AG04449 (cell line): ENCODE measurements at regions of chr10 and their contacts with region 1.

Region 1: DNA sequence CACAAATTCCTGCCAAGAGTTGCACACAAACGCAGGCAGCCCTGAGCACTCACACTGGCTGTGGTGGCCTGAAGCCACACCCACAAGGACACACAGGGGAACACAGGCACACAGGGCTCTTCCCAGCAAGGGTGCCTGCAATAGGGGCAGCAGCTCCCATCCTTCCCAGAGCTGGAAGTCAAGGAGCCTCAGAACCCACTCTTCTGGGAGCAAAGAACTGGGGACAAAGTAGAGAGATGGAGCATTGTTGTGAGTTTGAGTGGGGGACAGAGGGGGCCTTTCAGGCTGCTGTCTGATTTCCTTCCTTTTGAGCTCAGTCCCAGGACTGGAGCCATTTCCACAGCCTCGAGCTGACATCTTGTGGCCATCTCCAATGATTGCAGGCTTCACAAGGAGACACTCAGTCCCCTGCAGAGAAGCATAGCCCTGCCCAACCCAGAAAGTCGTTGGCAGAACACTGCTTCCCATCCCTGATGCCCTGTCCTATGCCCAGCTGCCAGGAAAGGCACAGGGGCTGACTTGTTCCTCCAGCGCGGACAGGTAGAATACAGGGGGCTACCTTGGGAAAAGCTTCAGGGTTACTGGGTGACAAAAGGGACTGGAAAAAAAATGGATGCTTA is 34.4 kb upstream of the SLF2 start:
- DNase-seq: no peak
- H3K4me3 ChIP-seq: no peak overlapping the region
- CTCF ChIP-seq: peak; percentile 83

Region 2: DNA sequence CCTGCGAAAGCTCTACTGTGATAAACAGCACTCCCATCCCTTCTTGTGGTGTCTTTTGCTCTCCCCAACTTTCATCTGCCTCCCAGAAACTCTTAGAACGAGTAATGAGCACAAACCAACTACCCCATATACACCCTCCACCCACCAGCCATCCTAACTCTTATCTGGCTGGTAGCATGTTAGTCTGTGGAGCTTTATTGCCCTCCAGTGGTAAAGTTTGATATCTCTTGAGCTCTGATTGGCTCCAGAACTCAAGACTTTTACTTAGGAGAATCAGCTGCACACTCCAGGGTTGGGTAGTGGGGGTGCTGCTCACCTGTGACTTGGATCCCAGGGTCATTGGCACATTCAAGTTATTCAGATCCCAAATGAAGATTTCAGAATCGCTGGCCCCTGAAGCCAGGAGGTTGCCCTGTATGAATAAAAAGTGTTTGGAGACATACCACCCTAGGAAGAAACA is 369.7 kb before region 1 on chr10:
- CTCF ChIA-PET with region 1: interaction called, 23 read pairs
- POLR2A ChIA-PET with region 1: no interaction called
- DNase-seq: no peak
- H3K4me3 ChIP-seq: no peak overlapping the region
- CTCF ChIP-seq: peak; percentile 63

Region 3: GRCh38 chr10:100529475-100530298 is 348.7 kb before region 1 on chr10 and contains the start of gene NDUFB8:
- CTCF ChIA-PET with region 1: interaction called, 50 read pairs
- POLR2A ChIA-PET with region 1: interaction called, 3 read pairs
- DNase-seq: no peak
- H3K4me3 ChIP-seq: peak within 1 kb of the TSS; percentile 98
- CTCF ChIP-seq: no peak

Region 4: DNA sequence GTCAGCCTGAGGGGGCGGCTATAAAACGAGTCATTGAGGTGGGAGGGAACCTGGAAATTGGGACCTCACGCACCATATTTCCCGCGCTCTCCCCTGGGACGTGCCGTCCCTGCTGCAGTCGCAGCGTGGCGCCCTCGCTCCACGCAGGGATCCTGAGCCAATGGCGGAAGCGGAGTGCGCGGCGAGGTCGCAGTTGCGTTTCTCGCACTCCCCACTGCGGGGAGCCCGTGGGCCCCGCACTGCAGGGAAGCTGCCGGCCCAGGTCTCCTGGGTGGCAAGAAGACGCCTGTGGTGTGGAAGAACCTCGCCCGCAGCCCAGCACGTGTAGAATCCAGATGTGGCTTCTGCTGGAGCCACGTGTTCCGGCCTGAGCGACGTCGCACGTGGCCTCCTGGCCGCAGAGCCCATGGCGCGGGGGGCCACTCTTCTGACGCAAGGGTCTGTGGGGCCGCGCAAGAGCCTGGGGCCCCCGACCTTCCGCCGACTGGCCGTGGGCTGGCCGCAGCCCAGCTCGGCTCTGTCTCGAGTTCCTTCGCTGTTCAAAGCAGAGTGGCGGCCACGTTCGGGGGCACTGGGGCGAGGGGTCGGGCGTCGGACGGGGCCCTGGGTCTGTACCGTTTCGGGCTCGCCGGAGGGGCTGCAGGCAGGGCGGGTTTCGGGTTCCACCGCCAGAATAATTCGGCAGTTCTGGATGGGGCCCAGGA is 316.2 kb before region 1 on chr10:
- CTCF ChIA-PET with region 1: interaction called, 235 read pairs
- POLR2A ChIA-PET with region 1: interaction called, 7 read pairs
- DNase-seq: no peak
- H3K4me3 ChIP-seq: no peak overlapping the region
- CTCF ChIP-seq: peak; percentile 91

Region 5: GRCh38 chr10:100670828-100671479 is 207.4 kb before region 1 on chr10:
- CTCF ChIA-PET with region 1: interaction called, 20 read pairs
- POLR2A ChIA-PET with region 1: no interaction called
- DNase-seq: no peak
- H3K4me3 ChIP-seq: no peak overlapping the region
- CTCF ChIP-seq: peak; percentile 67

Region 6: GRCh38 chr10:100890673-100891317 is 12.4 kb after region 1 on chr10:
- CTCF ChIA-PET with region 1: interaction called, 41 read pairs
- POLR2A ChIA-PET with region 1: no interaction called
- DNase-seq: peak; percentile 89
- H3K4me3 ChIP-seq: no peak overlapping the region
- CTCF ChIP-seq: no peak